Endothelial cell of umbilical vein (primary cell): ENCODE measurements at regions of chr9 and their contacts with region 1.

Region 1: GRCh38 chr9:117757561-117758190 is 53.5 kb downstream of the TLR4 start:
- DNase-seq: no peak
- H3K4me3 ChIP-seq: no peak overlapping the region
- H3K27ac ChIP-seq: no peak overlapping the region
- H3K4me1 ChIP-seq: peaks cover 2% of the 10 kb centered on the region
- H3K27me3 ChIP-seq: peaks cover 0 to 2% of the 10 kb centered on the region in 2 experiments
- CTCF ChIP-seq: no peak
- POLR2A ChIP-seq: no peak

Region 2: DNA sequence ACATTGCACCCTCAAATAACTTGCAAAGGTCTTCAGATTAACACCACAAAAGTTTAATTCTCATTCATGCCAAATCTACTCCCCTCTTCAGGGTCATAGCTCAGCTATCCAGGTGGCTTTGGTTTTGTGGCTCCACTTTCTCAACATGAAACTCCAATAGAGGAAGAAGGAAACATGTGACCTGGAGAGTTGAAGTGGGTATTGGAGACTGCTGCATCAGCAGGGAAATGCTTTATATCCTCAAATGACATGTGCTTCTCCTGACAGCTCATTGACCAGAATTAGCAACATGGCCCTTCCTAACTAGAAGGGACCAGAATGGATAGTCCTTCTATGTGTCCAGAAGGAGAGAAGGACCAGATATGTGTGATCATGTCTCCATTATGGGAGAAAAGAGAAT is 20.1 kb after region 1 on chr9:
- CTCF ChIA-PET with region 1: no interaction called
- POLR2A ChIA-PET with region 1: no interaction called
- dilution Hi-C with region 1: no loop called
- intact Hi-C with region 1: loop called (anchors 2 kb)
- DNase-seq: no peak
- H3K4me3 ChIP-seq: no peak overlapping the region
- H3K27ac ChIP-seq: no peak overlapping the region
- H3K4me1 ChIP-seq: peaks cover 2% of the 10 kb centered on the region
- H3K27me3 ChIP-seq: peaks cover 0 to 4% of the 10 kb centered on the region in 2 experiments
- CTCF ChIP-seq: no peak
- POLR2A ChIP-seq: no peak